Ovary (tissue), 10 donors: ENCODE measurements at regions of chr11 and their contacts with region 1.

Region 1: DNA sequence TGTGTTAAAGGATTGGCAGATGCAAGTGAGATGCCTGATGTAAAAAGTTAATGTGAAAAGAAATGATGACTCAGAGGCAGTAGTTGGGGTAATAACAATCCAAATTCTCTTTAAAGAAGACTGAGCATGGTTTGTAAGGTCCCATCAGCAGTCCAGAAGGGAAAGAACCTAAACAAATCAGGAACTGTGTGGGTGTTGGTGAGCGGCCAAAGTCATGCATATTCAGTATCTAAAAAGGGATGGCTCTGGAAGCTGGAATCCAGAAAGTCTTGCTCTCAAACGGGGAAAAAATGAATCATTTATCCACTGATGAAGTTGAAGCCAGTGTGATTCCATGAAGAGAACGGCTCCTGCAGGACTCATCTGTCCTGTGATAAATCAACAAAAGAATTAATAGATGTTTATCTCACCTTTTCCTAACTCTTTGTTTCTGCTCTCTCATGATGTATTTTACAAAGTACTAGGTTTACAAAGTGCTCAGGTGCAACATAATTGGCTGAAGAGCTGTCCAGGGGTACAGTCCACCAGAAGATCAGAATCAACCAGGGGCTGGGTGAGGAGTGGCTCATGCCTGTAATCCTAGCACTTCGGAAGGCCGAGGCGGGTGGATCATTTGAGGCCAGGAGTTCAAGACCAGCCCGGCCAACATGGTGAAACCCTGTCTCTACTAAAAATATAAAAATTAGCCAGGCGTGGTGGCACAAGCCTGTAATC is 20.5 kb upstream of the SORL1-AS1 start:
- DNase-seq: no peak
- H3K4me3 ChIP-seq: no peak overlapping the region
- H3K27ac ChIP-seq: no peak overlapping the region
- H3K4me1 ChIP-seq: no peaks in the 10 kb centered on the region
- H3K27me3 ChIP-seq: no peaks in the 10 kb centered on the region
- CTCF ChIP-seq: no peak
- EP300 ChIP-seq: no peak
- POLR2A ChIP-seq: no peak

Region 2: GRCh38 chr11:120917559-120918239 is 555.5 kb before region 1 on chr11:
- intact Hi-C with region 1: loop called in 1 of 4 experiments (anchors 5 kb)
- DNase-seq: no peak
- H3K4me3 ChIP-seq: no peak overlapping the region
- H3K27ac ChIP-seq: no peak overlapping the region
- H3K4me1 ChIP-seq: no peaks in the 10 kb centered on the region
- H3K27me3 ChIP-seq: no peaks in the 10 kb centered on the region
- CTCF ChIP-seq: no peak
- EP300 ChIP-seq: no peak
- POLR2A ChIP-seq: no peak